Activated T-helper 1 cell treated with anti-CD3 and anti-CD28 coated beads, Interleukin-12 subunit alpha, Interleukin-12 subunit beta, Interleukin-2, Interleukin-4 antibody, amounts not matched to agents 30 ng/mL and 10 ng/mL and 1 ng/mL, durations not matched to agents 14 hours and 24 hours and 36 hours (primary cell): ENCODE measurements at regions of chr10 and their contacts with region 1.

Region 1: DNA sequence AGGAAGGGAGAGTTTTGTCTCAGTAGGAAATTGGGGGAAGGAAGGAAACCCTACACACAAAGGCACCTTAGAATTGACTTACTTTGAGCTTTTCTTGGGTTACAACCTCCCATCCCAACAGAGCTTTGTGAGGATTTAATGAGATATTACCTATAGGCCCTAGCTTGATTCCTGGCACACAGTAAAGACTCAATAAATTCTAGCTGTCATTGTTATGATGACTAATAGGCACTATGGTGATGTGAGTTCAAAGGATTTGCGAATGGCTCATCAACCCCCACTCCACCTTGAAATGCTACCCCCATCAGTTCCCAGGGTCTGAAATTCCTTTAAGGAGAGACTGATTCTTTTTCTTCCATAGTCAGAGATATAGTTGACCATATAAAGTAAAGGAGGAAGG is 67.9 kb upstream of the SMNDC1 start:
- DNase-seq: no peak
- H3K4me3 Mint-ChIP-seq: no peak overlapping the region
- H3K27ac Mint-ChIP-seq: no peak overlapping the region
- H3K4me1 Mint-ChIP-seq: peaks cover 51% of the 10 kb centered on the region
- H3K27me3 Mint-ChIP-seq: no peaks in the 10 kb centered on the region

Region 2: GRCh38 chr10:110326351-110327032 is 46.2 kb before region 1 on chr10:
- intact Hi-C with region 1: loop called (anchors 1 kb)
- DNase-seq: no peak
- H3K4me3 Mint-ChIP-seq: peak overlapping the region; percentile 0
- H3K27ac Mint-ChIP-seq: peak overlapping the region; percentile 69
- H3K4me1 Mint-ChIP-seq: peaks cover 60% of the 10 kb centered on the region
- H3K27me3 Mint-ChIP-seq: peaks cover 3% of the 10 kb centered on the region